Activated T-helper 1 cell treated with anti-CD3 and anti-CD28 coated beads, Interleukin-12 subunit alpha, Interleukin-12 subunit beta, Interleukin-2, Interleukin-4 antibody, amounts not matched to agents 30 ng/mL and 10 ng/mL and 1 ng/mL, durations not matched to agents 14 hours and 24 hours and 36 hours (primary cell): ENCODE measurements at regions of chr16 and their contacts with region 1.

Region 1: GRCh38 chr16:79316004-79316458 is 284.5 kb downstream of the MAF start:
- DNase-seq: peak; percentile 54
- H3K4me3 Mint-ChIP-seq: peak overlapping the region; percentile 64
- H3K27ac Mint-ChIP-seq: peak overlapping the region; percentile 90
- H3K4me1 Mint-ChIP-seq: peaks cover 29% of the 10 kb centered on the region
- H3K27me3 Mint-ChIP-seq: peaks cover 10% of the 10 kb centered on the region

Region 2: DNA sequence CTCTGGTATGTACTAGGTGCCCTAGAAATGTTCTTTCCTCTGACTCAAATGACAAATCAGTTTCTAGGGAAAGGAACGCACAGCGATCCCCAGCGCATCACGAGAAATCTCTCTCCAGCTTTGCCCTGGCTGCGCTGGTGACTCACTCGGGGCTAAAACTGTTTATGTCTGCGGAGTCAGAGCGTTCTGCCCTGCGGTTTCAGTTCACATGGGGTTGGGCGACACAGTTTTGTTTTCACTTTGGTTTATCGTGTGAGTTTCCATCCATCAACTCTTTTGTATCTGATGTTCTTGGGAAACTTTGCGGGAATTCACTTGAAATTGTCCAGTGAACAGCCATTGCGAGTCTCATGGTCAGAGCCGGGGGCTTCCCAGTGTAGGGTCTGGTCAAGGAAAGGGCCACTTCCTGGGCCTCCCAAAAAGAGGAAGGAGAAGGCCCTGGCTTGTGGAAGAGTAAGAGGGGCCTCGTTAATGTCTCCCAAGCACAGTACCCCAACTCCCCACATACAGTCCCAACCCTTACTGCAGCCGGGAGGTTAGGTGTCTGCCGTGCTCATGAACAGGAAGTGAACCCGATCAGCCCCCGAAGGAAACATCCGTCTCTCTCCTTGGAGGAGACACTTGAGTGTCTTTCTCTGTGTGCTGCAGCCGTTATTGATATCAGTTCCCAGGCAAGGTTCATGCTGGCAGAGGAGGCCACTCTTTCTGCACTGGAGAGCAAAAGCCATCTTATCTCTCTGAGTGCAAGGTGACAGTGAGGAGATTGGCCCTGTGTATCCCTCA is 573.3 kb before region 1 on chr16:
- intact Hi-C with region 1: loop called (anchors 1 kb)
- DNase-seq: peak; percentile 70
- H3K4me3 Mint-ChIP-seq: peak overlapping the region; percentile 74
- H3K27ac Mint-ChIP-seq: peak overlapping the region; percentile 77
- H3K4me1 Mint-ChIP-seq: peaks cover 33% of the 10 kb centered on the region
- H3K27me3 Mint-ChIP-seq: peaks cover 10% of the 10 kb centered on the region

Region 3: DNA sequence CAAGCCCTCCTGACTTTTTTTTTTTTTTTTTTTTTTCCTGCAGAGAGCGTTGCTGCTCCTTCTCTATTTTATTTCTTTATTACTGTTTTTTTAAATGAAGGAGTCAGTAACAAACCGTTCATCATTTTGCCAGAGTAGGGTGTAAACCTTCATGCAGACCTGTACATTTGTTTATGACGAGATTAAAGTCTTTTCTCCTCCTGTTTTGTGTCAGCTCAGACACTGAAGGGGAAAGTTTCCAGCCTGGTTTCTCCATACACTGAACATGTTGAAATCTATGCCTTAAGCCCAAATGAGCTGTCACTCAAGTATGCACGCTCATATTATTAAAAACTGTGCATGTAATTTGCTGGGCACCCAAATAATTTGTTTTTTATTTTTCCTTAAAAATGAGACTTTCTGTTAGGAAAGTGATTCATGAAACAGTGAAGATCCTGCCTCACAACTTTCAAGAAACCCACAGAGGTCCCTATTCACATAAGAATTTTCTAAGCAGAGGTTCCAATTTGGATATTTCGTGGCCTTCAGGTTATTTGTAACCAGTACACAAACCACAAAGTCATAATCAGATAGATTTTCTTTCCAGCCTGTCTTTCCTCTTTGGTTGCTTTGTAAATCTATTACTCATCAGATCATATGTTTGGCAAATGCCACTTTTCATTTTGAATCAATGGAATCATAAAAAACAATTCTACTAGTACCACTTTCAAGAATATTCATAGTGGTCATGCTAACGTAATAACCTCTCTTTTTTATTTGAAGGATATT is 415.8 kb before region 1 on chr16:
- intact Hi-C with region 1: loop called (anchors 1 kb)
- DNase-seq: no peak
- H3K4me3 Mint-ChIP-seq: no peak overlapping the region
- H3K27ac Mint-ChIP-seq: peak overlapping the region; percentile 51
- H3K4me1 Mint-ChIP-seq: peaks cover 42% of the 10 kb centered on the region
- H3K27me3 Mint-ChIP-seq: no peaks in the 10 kb centered on the region

Region 4: GRCh38 chr16:79217375-79218011 is 98.5 kb before region 1 on chr16:
- intact Hi-C with region 1: loop called (anchors 1 kb)
- DNase-seq: peak; percentile 19
- H3K4me3 Mint-ChIP-seq: no peak overlapping the region
- H3K27ac Mint-ChIP-seq: no peak overlapping the region
- H3K4me1 Mint-ChIP-seq: peaks cover 19% of the 10 kb centered on the region
- H3K27me3 Mint-ChIP-seq: no peaks in the 10 kb centered on the region

Region 5: DNA sequence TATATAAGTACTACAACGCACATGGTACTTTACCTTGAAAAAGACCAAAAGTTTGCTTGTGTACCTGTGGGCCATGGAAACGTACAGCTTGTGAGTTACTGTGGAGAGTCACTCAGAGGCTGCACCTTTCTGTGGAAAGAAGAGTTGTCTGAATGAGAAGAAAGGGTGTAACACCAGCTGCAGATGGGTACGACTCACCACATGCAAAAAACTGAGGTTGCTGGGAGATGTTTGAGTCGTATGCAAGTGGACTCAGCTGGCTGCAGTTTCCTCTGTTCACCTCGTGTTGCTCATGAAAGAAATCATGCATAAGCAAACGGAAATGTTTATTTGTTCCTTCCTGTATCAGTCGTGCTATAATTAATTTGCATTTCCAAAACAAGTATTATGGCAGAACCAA is 1202.4 kb after region 1 on chr16:
- intact Hi-C with region 1: loop called (anchors 2 kb)
- DNase-seq: peak; percentile 44
- H3K4me3 Mint-ChIP-seq: peak overlapping the region; percentile 69
- H3K27ac Mint-ChIP-seq: no peak overlapping the region
- H3K4me1 Mint-ChIP-seq: peaks cover 21% of the 10 kb centered on the region
- H3K27me3 Mint-ChIP-seq: peaks cover 6% of the 10 kb centered on the region